ENCODE measurements at regions of chr2 and their contacts with region 1.

Region 1: GRCh38 chr2:173571021-173571882 is 216.6 kb downstream of the CDCA7 start:
- DNase-seq: peak; percentile 59 to 87
- H3K4me3 ChIP-seq: peak overlapping the region; percentile 22; the same call in 1 of the 2 replicates
- H3K27ac ChIP-seq: peak overlapping the region; percentile 58
- H3K4me1 ChIP-seq: peaks cover 30% of the 10 kb centered on the region
- H3K27me3 ChIP-seq: peaks cover 5% of the 10 kb centered on the region; the same call in 1 of the 2 replicates
- CTCF ChIP-seq: peak; percentile 75

Region 2: GRCh38 chr2:173462892-173463840 is 108.1 kb before region 1 on chr2:
- CTCF ChIA-PET with region 1: no interaction called
- POLR2A ChIA-PET with region 1: no interaction called
- intact Hi-C with region 1: no loop called
- DNase-seq: no peak
- H3K4me3 ChIP-seq: no peak overlapping the region
- H3K27ac ChIP-seq: no peak overlapping the region
- H3K4me1 ChIP-seq: no peaks in the 10 kb centered on the region
- H3K27me3 ChIP-seq: no peaks in the 10 kb centered on the region
- CTCF ChIP-seq: no peak

Region 3: DNA sequence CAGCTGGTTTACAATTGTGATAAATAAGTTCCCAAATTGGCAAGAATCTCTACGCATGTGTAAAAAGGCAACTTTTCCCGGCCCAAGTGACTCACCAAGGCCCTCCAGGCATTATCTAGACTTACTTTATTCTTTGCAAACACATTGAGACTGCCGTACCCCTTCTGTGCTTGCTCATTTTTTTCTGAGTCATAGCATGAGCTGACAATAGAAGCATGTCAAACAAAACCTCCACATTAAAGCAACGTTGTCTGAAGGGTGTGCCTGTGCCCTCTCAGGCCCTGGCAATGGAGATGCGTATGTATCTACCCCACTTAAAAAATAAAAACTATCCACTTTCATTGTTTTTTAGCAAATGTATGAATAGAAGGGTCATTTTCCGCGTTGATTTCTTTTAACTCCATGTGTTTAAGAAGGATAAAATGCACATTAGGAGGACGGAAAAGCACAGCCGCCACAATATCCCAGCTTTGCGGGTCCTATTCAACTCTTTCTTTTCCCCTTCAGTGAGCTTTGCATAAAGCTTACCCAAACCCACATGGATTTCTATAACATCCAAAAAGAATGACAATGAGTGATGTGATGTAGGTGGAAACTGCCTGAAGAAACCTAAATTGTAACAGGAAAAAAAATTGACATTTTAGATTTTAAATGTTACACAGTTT is 81.6 kb after region 1 on chr2:
- CTCF ChIA-PET with region 1: no interaction called
- POLR2A ChIA-PET with region 1: no interaction called
- intact Hi-C with region 1: loop called (anchors 1 kb)
- DNase-seq: peak; percentile 87 to 97
- H3K4me3 ChIP-seq: no peak overlapping the region
- H3K27ac ChIP-seq: peak overlapping the region; percentile 86
- H3K4me1 ChIP-seq: peaks cover 18% of the 10 kb centered on the region
- H3K27me3 ChIP-seq: no peaks in the 10 kb centered on the region
- CTCF ChIP-seq: no peak

Region 4: DNA sequence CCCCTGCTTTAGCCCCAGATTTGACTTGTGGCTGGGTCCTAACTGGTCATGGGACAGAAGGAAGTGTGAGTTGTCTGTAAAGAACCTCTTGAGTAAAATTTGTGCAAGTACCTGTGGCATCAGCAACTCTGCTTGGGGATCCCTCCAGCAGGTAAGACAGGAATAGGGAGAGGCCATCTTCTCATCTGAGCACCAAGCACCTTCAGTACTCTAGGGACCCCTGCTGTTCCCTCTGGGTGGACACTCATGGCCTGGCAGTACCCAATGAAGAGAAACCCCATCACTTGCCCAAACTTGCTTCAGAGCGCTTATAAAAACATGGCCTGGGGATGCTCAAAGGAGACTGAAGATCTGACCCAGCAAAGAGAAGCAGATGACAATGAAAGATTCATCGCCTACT is 96.2 kb after region 1 on chr2:
- CTCF ChIA-PET with region 1: no interaction called
- POLR2A ChIA-PET with region 1: no interaction called
- intact Hi-C with region 1: loop called (anchors 2 kb)
- DNase-seq: no peak
- H3K4me3 ChIP-seq: no peak overlapping the region
- H3K27ac ChIP-seq: no peak overlapping the region
- H3K4me1 ChIP-seq: peaks cover 6% of the 10 kb centered on the region; the same call in 1 of the 2 replicates
- H3K27me3 ChIP-seq: peaks cover 4% of the 10 kb centered on the region; the same call in 1 of the 2 replicates
- CTCF ChIP-seq: peak; percentile 26; the same call in 1 of the 2 replicates

Region 5: DNA sequence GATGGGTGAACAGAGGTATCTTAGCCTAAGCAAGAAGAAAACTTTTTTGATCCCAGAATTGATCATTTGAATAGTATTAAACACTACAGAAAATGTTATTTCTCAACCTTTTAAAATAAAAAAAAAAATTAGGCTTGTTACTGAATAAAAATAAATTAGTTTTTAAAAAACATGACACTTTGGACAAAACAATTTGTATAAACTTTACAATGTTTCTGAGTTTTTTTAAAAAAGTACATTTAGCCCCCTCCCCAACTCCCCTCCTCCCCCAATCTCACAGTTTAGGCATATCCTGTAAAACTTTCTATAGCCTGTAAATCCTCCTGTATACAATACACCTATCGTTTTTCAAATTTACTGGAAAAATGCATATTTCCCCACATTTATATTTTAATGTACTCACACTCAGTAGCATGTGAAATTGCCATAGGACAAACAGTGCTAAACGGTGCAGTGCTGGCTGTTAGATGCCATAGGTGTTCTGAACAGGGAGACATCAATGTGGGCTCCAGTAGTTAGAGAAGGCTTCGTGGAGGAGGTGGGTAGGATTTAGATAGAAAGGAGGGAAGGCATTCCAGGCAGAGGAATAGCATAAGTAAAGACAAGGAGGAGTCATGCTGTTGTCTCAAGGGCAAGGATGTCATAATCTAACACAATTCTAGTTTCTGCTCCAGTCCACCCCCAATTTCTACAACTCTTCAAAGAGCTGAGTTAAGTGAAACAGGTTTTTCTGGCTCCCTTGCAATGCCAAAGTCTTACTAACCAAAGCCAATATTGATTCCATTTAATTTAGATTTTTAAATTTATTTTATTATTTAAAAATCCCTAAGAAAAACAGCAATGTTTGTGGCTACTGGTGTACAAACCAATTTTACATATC is 343.0 kb after region 1 on chr2:
- CTCF ChIA-PET with region 1: no interaction called
- POLR2A ChIA-PET with region 1: no interaction called
- intact Hi-C with region 1: loop called (anchors 10 kb)
- DNase-seq: peak in 1 of 2 experiments; percentile 82
- H3K4me3 ChIP-seq: no peak overlapping the region
- H3K27ac ChIP-seq: peak overlapping the region; percentile 22; the same call in 1 of the 2 replicates
- H3K4me1 ChIP-seq: peaks cover 14% of the 10 kb centered on the region
- H3K27me3 ChIP-seq: no peaks in the 10 kb centered on the region
- CTCF ChIP-seq: no peak

Region 6: GRCh38 chr2:174951745-174952144 is 1380.5 kb after region 1 on chr2:
- CTCF ChIA-PET with region 1: no interaction called
- POLR2A ChIA-PET with region 1: no interaction called
- intact Hi-C with region 1: no loop called
- DNase-seq: no peak
- H3K4me3 ChIP-seq: no peak overlapping the region
- H3K27ac ChIP-seq: no peak overlapping the region
- H3K4me1 ChIP-seq: no peaks in the 10 kb centered on the region
- H3K27me3 ChIP-seq: no peaks in the 10 kb centered on the region
- CTCF ChIP-seq: no peak

Measured in PC-9 (cell line).